PC-9 (cell line): ENCODE measurements at regions of chr14 and their contacts with region 1.

Region 1: DNA sequence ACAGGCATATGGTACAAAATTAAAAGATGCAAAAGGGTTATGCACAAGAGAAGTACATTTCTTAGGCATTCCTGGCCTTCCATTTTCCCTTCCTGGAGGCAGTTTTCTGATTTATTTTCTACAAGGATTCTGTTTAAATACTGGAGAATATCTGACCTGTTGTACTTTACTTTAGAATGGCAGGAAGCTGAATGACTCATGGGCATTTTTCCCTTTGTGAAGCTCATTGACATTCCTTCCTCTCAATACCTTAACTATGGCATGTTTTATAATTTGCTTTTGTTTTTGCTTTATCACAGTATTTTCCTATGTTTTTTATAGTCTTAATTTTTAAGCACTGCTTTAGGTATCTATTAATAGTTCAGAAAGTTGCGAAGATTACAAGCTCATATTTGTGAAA is 62.7 kb downstream of the RCOR1 start:
- DNase-seq: peak; percentile 25 to 85
- H3K4me3 ChIP-seq: no peak overlapping the region
- H3K27ac ChIP-seq: peak overlapping the region; percentile 49
- H3K4me1 ChIP-seq: peaks cover 30% of the 10 kb centered on the region
- H3K27me3 ChIP-seq: no peaks in the 10 kb centered on the region
- CTCF ChIP-seq: no peak

Region 2: GRCh38 chr14:102606296-102606695 is 48.9 kb before region 1 on chr14:
- CTCF ChIA-PET with region 1: no interaction called
- POLR2A ChIA-PET with region 1: interaction called, 3 read pairs
- intact Hi-C with region 1: loop called (anchors 2 kb)
- DNase-seq: no peak
- H3K4me3 ChIP-seq: no peak overlapping the region
- H3K27ac ChIP-seq: no peak overlapping the region
- H3K4me1 ChIP-seq: peaks cover 29% of the 10 kb centered on the region
- H3K27me3 ChIP-seq: no peaks in the 10 kb centered on the region
- CTCF ChIP-seq: no peak

Region 3: DNA sequence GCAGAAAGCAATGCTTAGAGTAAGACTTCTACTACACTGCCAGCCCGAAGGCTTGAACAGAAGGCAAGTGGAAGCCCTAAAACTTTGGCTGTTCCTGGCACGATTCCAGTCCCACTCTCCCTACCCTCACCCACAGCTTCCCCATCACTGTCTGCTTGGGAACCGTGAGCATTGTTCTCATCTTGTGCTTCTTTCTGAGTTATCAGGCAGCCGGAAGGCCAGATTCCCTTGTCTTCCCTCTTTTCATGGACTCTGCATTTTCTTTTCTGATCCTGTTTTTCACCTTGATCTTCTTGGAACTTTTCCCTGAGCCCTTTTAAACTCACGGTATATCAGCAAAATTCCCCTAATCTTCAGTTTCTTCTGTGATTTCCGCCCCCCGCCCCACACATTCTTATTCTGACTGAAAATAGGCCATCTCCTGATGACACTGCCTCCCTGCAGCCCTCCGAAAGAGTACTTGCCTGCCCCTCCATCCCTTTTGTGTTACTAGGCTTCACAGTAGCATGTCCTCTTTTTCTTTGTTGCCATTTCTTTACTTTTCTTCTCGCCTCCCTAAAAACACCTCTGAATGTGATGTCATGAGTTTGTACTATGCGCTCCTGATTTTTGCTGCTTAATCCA is 32.8 kb before region 1 on chr14:
- CTCF ChIA-PET with region 1: interaction called, 10 read pairs
- POLR2A ChIA-PET with region 1: no interaction called
- intact Hi-C with region 1: no loop called
- DNase-seq: no peak
- H3K4me3 ChIP-seq: no peak overlapping the region
- H3K27ac ChIP-seq: no peak overlapping the region
- H3K4me1 ChIP-seq: no peaks in the 10 kb centered on the region
- H3K27me3 ChIP-seq: no peaks in the 10 kb centered on the region
- CTCF ChIP-seq: no peak